ENCODE measurements at regions of chr20 and their contacts with region 1.

Region 1: GRCh38 chr20:59087829-59088433 is 45.3 kb upstream of the PRELID3B start:
- DNase-seq: peak; percentile 93
- ATAC-seq: peak; percentile 81
- H3K4me3 Mint-ChIP-seq: no peak overlapping the region
- H3K27ac Mint-ChIP-seq: no peak overlapping the region
- H3K4me1 Mint-ChIP-seq: peaks cover 4% of the 10 kb centered on the region
- H3K27me3 Mint-ChIP-seq: no peaks in the 10 kb centered on the region

Region 2: GRCh38 chr20:59112978-59113377 is 25.0 kb after region 1 on chr20:
- CTCF ChIA-PET with region 1: interaction called, 26 read pairs
- POLR2A ChIA-PET with region 1: no interaction called
- intact Hi-C with region 1: no loop called
- DNase-seq: no peak
- ATAC-seq: no peak
- H3K4me3 Mint-ChIP-seq: no peak overlapping the region
- H3K27ac Mint-ChIP-seq: no peak overlapping the region
- H3K4me1 Mint-ChIP-seq: peaks cover 10% of the 10 kb centered on the region
- H3K27me3 Mint-ChIP-seq: no peaks in the 10 kb centered on the region

Region 3: DNA sequence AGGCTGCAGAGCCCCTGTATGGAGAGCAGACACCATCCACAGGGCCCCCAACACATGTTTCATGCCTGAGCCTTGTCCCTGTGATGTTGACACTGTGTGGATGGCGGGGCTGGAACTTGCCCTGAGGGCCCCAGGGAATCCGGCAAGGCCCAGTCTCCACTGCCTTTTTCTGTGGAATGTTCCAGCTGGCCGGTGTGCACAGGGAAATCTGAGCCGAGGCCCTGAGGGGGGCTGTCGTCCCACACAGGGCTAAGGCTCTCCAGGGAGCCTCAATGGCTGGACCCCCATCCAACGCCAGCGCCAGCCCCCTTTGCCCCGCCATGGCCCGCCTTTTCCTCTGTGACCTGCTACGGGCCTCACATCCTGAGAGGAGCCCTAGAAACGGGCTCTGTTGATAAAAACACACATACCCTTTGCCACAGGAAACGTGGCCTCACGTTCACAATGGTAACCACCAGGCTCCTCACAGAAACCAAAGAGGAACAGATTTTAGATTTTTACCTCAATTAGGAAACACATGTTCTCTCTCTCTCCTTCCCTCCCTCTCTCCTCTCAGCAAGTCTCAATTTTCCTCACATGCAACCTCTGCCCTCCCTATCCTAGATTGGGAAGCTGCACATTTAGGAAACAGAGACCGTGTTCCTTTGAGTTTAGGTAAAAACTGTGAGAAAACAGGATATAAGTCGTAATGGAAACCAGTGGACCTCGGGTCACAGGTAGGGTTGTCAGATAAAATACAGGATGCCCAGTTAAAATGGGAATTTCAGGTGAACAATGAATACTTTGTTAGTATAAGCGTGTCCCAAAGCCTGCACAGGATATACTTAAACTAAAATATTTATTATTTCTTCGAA is 61.9 kb after region 1 on chr20:
- CTCF ChIA-PET with region 1: interaction called, 12 read pairs
- POLR2A ChIA-PET with region 1: interaction called, 3 read pairs
- intact Hi-C with region 1: loop called in 1 of 2 experiments (anchors 5 kb)
- DNase-seq: peak; percentile 82
- ATAC-seq: peak; percentile 42
- H3K4me3 Mint-ChIP-seq: peak overlapping the region; percentile 58
- H3K27ac Mint-ChIP-seq: peak overlapping the region; percentile 95
- H3K4me1 Mint-ChIP-seq: peaks cover 96% of the 10 kb centered on the region
- H3K27me3 Mint-ChIP-seq: no peaks in the 10 kb centered on the region

Region 4: DNA sequence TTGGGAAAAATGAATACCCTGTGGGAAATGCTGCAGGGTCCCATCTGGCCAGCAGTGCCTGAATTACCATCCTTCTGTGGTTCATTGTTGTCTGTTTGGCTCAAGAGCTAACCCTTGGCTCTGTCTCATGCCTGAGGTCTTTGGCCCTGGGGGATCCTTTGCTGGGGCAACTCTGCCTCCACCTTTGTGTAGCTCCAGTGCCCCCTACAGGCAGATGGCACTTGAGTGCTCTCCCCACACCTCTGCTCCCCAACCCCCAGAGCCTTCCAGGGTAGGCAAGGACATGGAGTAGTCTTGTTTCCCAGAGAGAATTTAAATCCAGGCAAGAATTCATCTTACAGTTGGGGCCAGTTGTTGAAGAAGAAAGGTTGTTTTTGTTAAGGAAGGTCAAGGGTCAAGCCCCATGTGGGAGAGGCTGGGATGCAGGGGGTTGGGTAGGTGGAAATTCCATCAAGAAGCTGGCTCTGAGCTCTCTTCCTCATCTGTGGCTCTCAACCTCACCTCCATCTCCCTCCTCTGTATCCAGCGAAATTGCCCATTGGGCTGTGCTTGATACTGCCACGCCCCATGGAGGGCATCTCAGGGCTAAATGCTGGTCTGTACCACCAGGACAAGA is 119.9 kb after region 1 on chr20:
- CTCF ChIA-PET with region 1: interaction called, 131 read pairs
- POLR2A ChIA-PET with region 1: interaction called, 3 read pairs
- intact Hi-C with region 1: loop called (anchors 1 kb)
- DNase-seq: peak; percentile 91
- ATAC-seq: peak; percentile 97
- H3K4me3 Mint-ChIP-seq: no peak overlapping the region
- H3K27ac Mint-ChIP-seq: peak overlapping the region; percentile 74
- H3K4me1 Mint-ChIP-seq: peaks cover 32% of the 10 kb centered on the region
- H3K27me3 Mint-ChIP-seq: no peaks in the 10 kb centered on the region

Region 5: DNA sequence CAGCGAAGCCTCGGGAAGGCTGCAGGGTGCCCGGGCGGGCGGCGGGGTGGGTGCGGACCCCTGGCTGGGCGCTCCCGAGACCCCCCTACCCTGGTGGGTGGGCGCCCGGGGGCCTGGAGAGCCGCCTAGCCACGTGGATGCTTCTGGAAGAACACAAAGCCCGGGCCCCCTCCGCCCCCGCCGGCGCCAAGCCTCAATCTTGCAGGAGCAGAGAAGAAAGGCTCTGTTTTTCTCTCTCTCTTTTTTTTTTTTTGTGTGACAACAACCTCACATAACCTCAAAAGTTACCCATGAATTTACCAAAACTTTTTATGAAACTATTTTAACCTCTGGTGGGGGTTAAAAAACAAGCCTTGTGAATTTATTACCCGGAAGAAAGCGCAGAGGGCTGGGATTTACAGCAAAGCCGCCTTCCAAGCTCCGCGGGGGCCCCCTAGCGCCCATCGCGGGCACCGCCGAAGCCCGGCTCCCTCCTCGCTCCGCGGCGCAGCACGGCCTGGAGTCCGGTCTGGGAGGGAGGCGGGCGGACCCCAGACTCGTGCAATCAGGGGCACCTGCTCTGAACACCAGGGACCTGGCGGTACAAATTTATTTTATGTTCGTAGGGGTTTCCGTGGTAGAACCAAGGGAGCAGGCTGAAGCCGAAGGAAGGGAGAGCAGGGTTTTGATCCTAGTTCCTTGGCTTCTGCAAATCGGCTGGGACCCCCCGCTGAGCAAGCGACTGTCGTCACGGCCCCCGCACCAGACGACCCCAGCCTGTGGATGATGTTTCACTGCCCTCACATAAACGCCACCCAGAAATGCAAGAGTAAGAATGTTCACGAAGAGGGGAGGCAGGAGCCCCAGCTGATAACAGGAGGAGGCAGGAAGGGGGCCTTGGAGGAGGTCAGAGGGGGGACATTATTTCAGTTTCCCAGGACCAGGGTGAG is 134.6 kb after region 1 on chr20:
- CTCF ChIA-PET with region 1: interaction called, 36 read pairs
- POLR2A ChIA-PET with region 1: no interaction called
- intact Hi-C with region 1: loop called (anchors 1 kb)
- DNase-seq: peak; percentile 91
- ATAC-seq: peak; percentile 95
- H3K4me3 Mint-ChIP-seq: peak overlapping the region; percentile 65
- H3K27ac Mint-ChIP-seq: peak overlapping the region; percentile 81
- H3K4me1 Mint-ChIP-seq: peaks cover 31% of the 10 kb centered on the region
- H3K27me3 Mint-ChIP-seq: no peaks in the 10 kb centered on the region

Region 6: DNA sequence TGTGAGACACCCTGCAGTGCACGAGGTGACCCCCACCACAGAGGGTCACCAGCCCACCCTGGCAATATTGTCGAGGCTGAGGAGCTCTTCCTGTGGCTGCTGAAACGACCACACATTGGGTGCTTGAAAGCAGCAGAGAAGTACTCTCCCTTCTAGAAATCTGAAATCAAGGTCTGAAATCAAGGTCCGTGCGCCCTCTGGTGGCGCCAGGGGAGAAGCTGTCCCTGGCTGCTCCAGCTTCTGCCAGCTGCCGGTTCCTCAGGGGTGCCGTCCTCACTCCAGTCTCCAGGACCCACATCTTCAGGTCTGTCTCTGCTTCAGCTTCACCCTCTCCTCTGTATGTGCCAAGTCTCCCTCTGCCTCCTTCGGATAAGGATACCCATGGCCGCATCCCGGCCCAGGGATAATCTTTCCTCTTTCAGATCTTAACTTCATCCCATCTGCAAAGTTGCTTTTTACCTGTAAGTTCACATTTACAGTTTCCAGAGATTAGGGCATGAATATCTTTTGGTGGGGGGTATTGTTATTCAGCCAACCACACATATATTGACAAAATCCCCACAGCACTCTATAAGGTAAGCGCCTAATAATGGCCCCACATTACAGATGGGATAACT is 408.1 kb after region 1 on chr20:
- CTCF ChIA-PET with region 1: no interaction called
- POLR2A ChIA-PET with region 1: no interaction called
- intact Hi-C with region 1: loop called in 1 of 2 experiments (anchors 10 kb)
- DNase-seq: peak; percentile 83
- ATAC-seq: peak; percentile 75
- H3K4me3 Mint-ChIP-seq: no peak overlapping the region
- H3K27ac Mint-ChIP-seq: no peak overlapping the region
- H3K4me1 Mint-ChIP-seq: no peaks in the 10 kb centered on the region
- H3K27me3 Mint-ChIP-seq: peaks cover 7% of the 10 kb centered on the region

Region 7: DNA sequence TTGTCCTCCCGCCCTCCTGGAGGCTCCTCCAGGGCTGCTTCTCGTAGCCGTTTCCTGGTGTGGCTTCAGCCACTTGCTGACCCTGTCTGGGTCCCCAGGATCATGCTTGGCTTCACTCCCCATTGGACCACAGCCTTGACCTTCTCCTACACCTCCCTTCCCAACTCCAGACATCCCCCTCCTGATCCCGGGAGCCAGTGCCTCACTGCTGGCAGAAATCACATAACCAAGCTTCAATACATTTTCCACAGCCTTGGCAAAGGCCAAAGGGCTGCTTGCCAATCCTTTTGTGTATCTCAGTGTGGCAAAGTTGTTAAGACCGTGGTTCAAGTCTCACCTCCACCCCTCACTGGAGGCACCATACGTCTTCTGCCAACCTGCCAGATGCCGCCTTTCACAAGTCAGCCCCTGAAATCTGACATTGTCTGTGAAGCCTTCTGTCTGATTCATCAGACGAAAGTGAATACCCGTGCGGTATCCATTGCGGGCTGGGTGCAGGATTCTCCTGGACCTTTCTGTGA is 576.5 kb after region 1 on chr20:
- CTCF ChIA-PET with region 1: no interaction called
- POLR2A ChIA-PET with region 1: no interaction called
- intact Hi-C with region 1: no loop called
- DNase-seq: no peak
- ATAC-seq: no peak
- H3K4me3 Mint-ChIP-seq: no peak overlapping the region
- H3K27ac Mint-ChIP-seq: no peak overlapping the region
- H3K4me1 Mint-ChIP-seq: no peaks in the 10 kb centered on the region
- H3K27me3 Mint-ChIP-seq: peaks cover 14% of the 10 kb centered on the region